Activated naive CD4-positive, alpha-beta T cell treated with anti-CD3 and anti-CD28 coated beads for 36 hours (primary cell): ENCODE measurements at regions of chr17 and their contacts with region 1.

Region 1: GRCh38 chr17:43846221-43846712 is 709 bp upstream of the CD300LG start:
- DNase-seq: peak; percentile 85
- H3K4me3 Mint-ChIP-seq: no peak overlapping the region
- H3K27ac Mint-ChIP-seq: no peak overlapping the region
- H3K4me1 Mint-ChIP-seq: no peaks in the 10 kb centered on the region
- H3K27me3 Mint-ChIP-seq: peaks cover 8% of the 10 kb centered on the region

Region 2: DNA sequence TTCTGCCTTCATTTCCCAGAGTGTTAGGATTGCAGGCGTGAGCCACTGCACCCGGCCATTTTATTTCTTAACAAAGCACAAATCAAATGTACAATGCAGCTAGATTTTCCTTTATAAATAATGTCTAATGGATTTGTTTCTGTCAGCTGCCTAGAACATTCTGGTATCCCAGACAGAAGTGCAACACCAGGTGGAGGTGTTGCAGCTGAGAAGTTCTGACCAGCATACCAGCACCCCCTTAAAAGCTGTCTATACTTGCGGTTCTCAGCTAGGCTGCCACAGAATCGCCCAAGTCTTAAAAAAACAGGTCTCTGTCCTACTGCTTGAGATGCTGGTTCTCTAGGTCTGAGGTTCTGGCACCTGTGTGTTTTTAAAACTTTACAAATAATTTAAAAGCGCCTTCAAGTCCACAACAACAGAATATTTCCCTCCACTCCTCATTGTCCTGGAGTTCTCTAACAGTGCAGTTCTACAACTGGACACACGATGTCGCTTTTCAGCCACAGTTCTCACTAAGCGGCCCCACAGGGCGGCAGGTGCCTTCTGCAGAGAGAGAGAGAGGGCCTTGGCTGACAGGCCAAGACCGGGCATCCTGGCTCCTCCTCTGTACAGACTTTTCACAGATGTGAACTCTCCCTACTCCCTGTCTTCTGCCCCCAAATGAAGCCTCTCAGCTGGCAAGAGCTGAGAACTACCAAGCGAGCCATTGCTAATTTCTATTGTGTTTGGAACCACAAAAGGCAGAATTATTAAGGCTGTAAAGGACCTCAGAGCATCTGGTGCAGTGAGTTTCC is 152.0 kb before region 1 on chr17:
- CTCF ChIA-PET with region 1: interaction called, 4 read pairs
- intact Hi-C with region 1: loop called (anchors 5 kb)
- DNase-seq: peak; percentile 87
- H3K4me3 Mint-ChIP-seq: no peak overlapping the region
- H3K27ac Mint-ChIP-seq: no peak overlapping the region
- H3K4me1 Mint-ChIP-seq: no peaks in the 10 kb centered on the region
- H3K27me3 Mint-ChIP-seq: no peaks in the 10 kb centered on the region

Region 3: GRCh38 chr17:43778337-43779144 is 67.7 kb before region 1 on chr17 and contains the start of gene DUSP3:
- CTCF ChIA-PET with region 1: no interaction called
- intact Hi-C with region 1: loop called (anchors 2 kb)
- DNase-seq: peak; percentile 70
- H3K4me3 Mint-ChIP-seq: peak within 1 kb of the TSS; percentile 78
- H3K27ac Mint-ChIP-seq: no peak within 1 kb of the TSS
- H3K4me1 Mint-ChIP-seq: peaks cover 9% of the 10 kb centered on the region
- H3K27me3 Mint-ChIP-seq: peaks cover 13% of the 10 kb centered on the region
- total RNA-seq, gene DUSP3: 12.2 to 13.5 TPM

Region 4: GRCh38 chr17:43791589-43791988 is 54.7 kb before region 1 on chr17:
- CTCF ChIA-PET with region 1: interaction called, 3 read pairs
- intact Hi-C with region 1: loop called (anchors 5 kb)
- DNase-seq: no peak
- H3K4me3 Mint-ChIP-seq: no peak overlapping the region
- H3K27ac Mint-ChIP-seq: no peak overlapping the region
- H3K4me1 Mint-ChIP-seq: no peaks in the 10 kb centered on the region
- H3K27me3 Mint-ChIP-seq: peaks cover 3% of the 10 kb centered on the region

Region 5: GRCh38 chr17:43857942-43858600 is 11.8 kb after region 1 on chr17:
- CTCF ChIA-PET with region 1: interaction called, 15 read pairs
- intact Hi-C with region 1: no loop called
- DNase-seq: no peak
- H3K4me3 Mint-ChIP-seq: no peak overlapping the region
- H3K27ac Mint-ChIP-seq: no peak overlapping the region
- H3K4me1 Mint-ChIP-seq: no peaks in the 10 kb centered on the region
- H3K27me3 Mint-ChIP-seq: peaks cover 6% of the 10 kb centered on the region